Cardiac septum (tissue), 1 donor: ENCODE measurements at regions of chr2 and their contacts with region 1.

Region 1: GRCh38 chr2:220959391-220959802 is 612.7 kb downstream of the EPHA4 start:
- DNase-seq: peak; percentile 78

Region 2: GRCh38 chr2:221060376-221060775 is 101.0 kb after region 1 on chr2:
- intact Hi-C with region 1: no loop called
- DNase-seq: no peak

Region 3: GRCh38 chr2:221075203-221075602 is 115.8 kb after region 1 on chr2:
- intact Hi-C with region 1: loop called (anchors 5 kb)
- DNase-seq: no peak